HEK293T (cell line): ENCODE measurements at regions of chr11 and their contacts with region 1.

Region 1: DNA sequence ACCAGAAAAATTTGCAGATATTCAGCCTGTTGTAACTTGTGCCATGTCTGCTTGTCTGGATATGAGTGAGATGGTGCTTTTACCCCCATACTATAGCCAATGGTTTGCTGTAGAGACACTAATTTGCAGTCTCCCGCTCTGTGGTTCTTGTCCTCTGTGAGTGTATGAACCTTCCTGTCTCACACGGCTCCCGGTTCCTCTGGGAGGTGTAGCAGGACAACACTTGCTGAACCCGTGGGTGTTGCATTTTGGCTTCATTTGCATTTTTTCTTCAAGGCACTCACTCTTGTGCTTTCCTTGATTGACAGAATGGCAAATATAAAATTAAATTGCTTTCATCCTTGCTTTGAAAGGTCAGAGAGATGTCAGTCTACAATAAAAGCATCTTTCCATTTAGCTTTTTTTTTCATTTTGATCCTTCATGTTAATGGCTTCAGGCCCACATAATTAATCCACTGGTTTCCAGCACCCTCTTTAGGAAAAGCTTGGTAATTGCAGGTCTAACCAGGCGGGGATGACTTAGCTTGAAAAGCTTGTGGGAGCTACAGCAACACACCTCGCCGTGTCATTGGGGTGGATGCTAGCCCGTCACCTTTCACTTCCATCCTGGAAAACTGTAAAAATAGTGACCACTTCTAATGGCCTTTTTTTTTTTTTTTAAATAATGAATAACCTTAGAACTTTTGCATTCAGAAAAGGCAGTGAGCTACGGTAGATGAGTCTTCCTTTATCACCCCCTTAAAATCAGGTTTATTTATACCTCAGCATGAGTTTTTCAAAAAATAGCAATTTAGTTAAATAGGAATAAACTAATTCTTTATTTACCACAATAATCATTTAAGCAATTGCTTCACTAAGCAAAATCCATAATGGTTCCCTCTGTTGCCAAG is 27.4 kb upstream of the ST14 start:
- DNase-seq: peak; percentile 74

Region 2: DNA sequence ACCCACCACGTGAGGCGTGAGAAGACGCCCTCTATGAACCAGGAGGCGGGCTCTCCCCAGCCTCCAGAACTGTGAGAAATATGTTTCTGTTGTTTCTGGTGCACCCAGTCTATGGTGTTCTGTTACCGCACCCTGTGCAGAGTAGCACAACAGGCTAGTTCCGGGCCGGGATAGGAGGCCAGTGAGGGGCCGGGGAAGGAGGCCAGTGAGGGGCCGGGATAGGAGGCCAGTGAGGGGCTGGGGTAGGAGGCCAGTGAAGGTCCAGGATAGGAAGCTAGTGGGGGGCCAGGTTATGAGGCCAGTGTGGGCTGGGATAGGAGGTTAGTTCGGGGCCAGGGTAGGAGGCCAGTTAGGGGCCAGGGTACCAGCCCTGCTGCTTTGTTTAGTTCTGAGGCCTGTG is 551.9 kb before region 1 on chr11:
- CTCF ChIA-PET with region 1: no interaction called
- POLR2A ChIA-PET with region 1: no interaction called
- DNase-seq: no peak

Region 3: DNA sequence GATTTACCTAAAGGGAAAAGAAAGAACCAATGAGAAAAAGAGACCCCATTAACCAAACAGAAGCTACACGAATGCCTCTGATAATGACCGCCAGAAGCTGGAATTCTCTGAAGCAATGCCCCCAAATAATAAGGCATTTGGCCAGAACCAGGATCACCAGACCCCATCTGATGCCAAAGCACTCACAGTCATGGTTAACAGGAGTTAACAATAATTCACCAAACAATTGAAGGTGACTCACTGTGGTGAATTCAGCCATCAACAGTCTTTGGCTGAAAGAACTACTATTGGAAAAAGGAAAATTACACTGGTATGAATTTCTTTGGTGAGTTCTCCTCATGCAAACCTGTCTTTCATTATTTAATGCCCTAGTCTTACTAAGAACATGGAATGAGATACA is 215.0 kb before region 1 on chr11:
- CTCF ChIA-PET with region 1: interaction called, 11 read pairs
- POLR2A ChIA-PET with region 1: no interaction called
- DNase-seq: no peak

Region 4: DNA sequence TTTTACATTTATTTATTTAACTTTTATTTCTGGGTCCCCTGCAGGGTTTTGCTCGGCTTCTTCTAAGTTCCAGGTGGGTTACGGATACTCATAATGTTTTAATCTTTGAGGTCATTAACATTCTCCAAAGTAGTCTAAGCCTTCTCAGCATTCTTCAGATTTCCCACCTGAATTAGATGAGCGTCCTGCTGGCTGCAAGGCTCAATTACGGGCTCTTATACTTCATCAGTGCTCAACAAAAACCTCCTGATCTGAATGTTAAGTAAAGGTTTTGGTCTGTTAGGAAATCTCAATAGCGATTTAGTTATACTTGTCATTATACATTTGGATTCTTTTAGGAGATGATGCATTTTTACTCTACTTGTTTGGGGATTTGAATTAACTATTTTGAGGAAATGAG is 209.5 kb before region 1 on chr11:
- CTCF ChIA-PET with region 1: interaction called, 14 read pairs
- POLR2A ChIA-PET with region 1: no interaction called
- DNase-seq: no peak

Region 5: GRCh38 chr11:129930296-129930695 is 201.9 kb before region 1 on chr11:
- CTCF ChIA-PET with region 1: interaction called, 14 read pairs
- POLR2A ChIA-PET with region 1: no interaction called
- DNase-seq: no peak